Activated B cell treated with CpG ODN at 0.5 μM for 24 hours (primary cell): ENCODE measurements at regions of chr5 and their contacts with region 1.

Region 1: GRCh38 chr5:131252824-131253171 is 11.1 kb upstream of the CDC42SE2 start:
- DNase-seq: peak; percentile 52
- ATAC-seq: peak; percentile 86
- H3K4me3 Mint-ChIP-seq: peak overlapping the region; percentile 84
- H3K27ac Mint-ChIP-seq: peak overlapping the region; percentile 94
- H3K4me1 Mint-ChIP-seq: peaks cover 81% of the 10 kb centered on the region
- H3K27me3 Mint-ChIP-seq: no peaks in the 10 kb centered on the region
- CTCF ChIP-seq: no peak

Region 2: GRCh38 chr5:130845049-130845765 is 407.6 kb before region 1 on chr5:
- CTCF ChIA-PET with region 1: no interaction called
- POLR2A ChIA-PET with region 1: no interaction called
- intact Hi-C with region 1: no loop called
- DNase-seq: no peak
- ATAC-seq: no peak
- H3K4me3 Mint-ChIP-seq: no peak overlapping the region
- H3K27ac Mint-ChIP-seq: no peak overlapping the region
- H3K4me1 Mint-ChIP-seq: no peaks in the 10 kb centered on the region
- H3K27me3 Mint-ChIP-seq: peaks cover 20% of the 10 kb centered on the region
- CTCF ChIP-seq: no peak

Region 3: DNA sequence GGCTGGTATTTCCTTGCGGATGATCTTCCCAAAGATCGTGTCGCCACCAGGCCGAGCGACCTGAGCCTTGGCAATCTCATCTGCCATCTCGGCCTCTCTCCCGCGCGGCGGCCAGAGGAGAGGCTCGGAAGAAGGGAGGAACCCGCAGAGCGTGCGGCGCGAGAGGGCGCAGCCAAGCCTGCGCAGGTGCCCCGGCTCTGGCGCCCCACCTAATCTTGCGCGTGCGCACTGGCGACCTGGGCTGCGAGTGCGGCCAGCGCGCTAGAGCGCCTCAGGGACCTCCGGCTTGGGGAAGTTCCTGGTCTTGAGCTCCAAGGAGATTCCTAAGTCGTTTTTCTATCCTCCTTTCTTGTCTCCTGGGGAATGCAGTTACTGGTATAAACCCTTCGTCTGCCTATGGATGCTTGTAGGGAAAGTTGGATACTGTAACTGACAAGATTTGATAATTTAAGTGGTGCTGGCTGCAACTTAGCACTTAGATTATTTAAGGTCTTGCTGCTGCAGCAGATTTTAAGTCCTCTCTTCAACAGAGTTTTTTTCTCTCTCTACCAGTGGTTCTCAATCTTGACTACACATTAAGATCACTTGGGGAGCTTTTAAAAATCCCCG is 87.6 kb before region 1 on chr5 and contains the start of gene HINT1:
- CTCF ChIA-PET with region 1: interaction called, 3 read pairs
- POLR2A ChIA-PET with region 1: interaction called, 5 read pairs
- intact Hi-C with region 1: loop called (anchors 1 kb)
- DNase-seq: peak; percentile 91
- ATAC-seq: peak; percentile 83
- H3K4me3 Mint-ChIP-seq: peak within 1 kb of the TSS; percentile 96
- H3K27ac Mint-ChIP-seq: peak within 1 kb of the TSS; percentile 95
- H3K4me1 Mint-ChIP-seq: peaks cover 43% of the 10 kb centered on the region
- H3K27me3 Mint-ChIP-seq: no peaks in the 10 kb centered on the region
- CTCF ChIP-seq: no peak
- total RNA-seq, gene HINT1: 201 and 212 TPM in 2 replicates

Region 4: DNA sequence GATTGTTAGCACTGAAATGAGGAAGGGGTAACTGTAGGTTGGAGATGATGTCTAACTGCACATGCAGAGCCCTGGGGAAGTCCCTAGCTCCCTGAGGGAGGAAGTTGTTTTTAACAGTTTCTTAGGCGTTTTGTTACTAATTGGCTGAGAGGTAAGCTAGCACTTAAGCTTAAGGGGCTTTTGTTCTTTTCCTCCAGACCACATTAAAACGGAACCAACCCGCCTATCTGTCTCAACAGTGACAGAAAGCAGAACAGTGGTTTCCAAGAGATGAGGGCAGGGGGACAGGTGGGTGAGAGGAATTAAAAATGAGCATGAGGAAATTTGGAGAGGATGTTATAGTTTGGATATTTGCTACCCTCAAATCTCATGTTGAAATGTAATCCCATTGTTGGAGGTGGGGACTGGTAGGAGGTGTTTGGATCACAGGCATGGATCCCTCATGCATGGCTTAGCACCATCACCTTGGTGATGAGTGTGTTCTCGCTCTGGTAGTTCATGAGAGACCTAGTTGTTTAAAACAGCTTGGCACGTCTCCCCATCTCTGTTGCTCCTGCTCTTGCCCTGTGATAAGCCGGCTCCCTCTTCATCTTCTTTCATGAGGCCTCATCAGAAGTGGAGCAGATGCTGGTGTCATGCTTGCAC is 43.2 kb before region 1 on chr5:
- CTCF ChIA-PET with region 1: interaction called, 4 read pairs
- POLR2A ChIA-PET with region 1: interaction called, 17 read pairs
- intact Hi-C with region 1: loop called (anchors 1 kb)
- DNase-seq: peak; percentile 44
- ATAC-seq: peak; percentile 87
- H3K4me3 Mint-ChIP-seq: peak overlapping the region; percentile 82
- H3K27ac Mint-ChIP-seq: peak overlapping the region; percentile 99
- H3K4me1 Mint-ChIP-seq: peaks cover 63% of the 10 kb centered on the region
- H3K27me3 Mint-ChIP-seq: no peaks in the 10 kb centered on the region
- CTCF ChIP-seq: no peak

Region 5: DNA sequence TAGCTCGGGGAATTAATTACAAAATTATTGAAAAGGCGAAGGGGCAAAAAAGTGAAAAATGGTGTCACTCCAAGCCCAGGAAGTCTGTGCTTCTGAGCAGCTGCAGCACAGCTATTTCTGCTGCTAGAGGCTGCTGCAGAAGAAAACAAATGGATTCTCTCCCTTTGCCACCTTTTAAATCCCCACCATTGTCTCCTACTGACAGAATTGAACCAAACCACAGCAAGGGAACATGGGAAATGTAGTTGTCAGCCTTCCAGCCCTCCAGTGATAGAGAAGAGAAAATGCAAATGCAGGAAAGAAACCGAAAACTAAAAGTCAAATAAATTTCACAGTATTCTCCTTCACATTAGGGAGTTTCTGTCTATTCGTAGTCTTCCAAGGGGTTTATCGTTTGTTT is 22.4 kb before region 1 on chr5:
- CTCF ChIA-PET with region 1: no interaction called
- POLR2A ChIA-PET with region 1: interaction called, 13 read pairs
- intact Hi-C with region 1: loop called (anchors 1 kb)
- DNase-seq: no peak
- ATAC-seq: peak; percentile 49
- H3K4me3 Mint-ChIP-seq: peak overlapping the region; percentile 12
- H3K27ac Mint-ChIP-seq: peak overlapping the region; percentile 12
- H3K4me1 Mint-ChIP-seq: peaks cover 29% of the 10 kb centered on the region
- H3K27me3 Mint-ChIP-seq: no peaks in the 10 kb centered on the region
- CTCF ChIP-seq: no peak

Region 6: GRCh38 chr5:131417240-131417869 is 164.6 kb after region 1 on chr5:
- CTCF ChIA-PET with region 1: no interaction called
- POLR2A ChIA-PET with region 1: no interaction called
- intact Hi-C with region 1: loop called (anchors 1 kb)
- DNase-seq: peak; percentile 56
- ATAC-seq: peak; percentile 61
- H3K4me3 Mint-ChIP-seq: peak overlapping the region; percentile 56
- H3K27ac Mint-ChIP-seq: peak overlapping the region; percentile 15
- H3K4me1 Mint-ChIP-seq: peaks cover 36% of the 10 kb centered on the region
- H3K27me3 Mint-ChIP-seq: no peaks in the 10 kb centered on the region
- CTCF ChIP-seq: peak; percentile 58